ENCODE measurements at regions of chr6 and their contacts with region 1.

Region 1: GRCh38 chr6:160462551-160463109 is 114.5 kb downstream of the SLC22A3 start:
- DNase-seq: peak; percentile 67
- H3K4me3 Mint-ChIP-seq: peak overlapping the region; percentile 26
- H3K27ac Mint-ChIP-seq: peak overlapping the region; percentile 63
- H3K4me1 Mint-ChIP-seq: peaks cover 51% of the 10 kb centered on the region
- H3K27me3 Mint-ChIP-seq: peaks cover 15% of the 10 kb centered on the region

Region 2: DNA sequence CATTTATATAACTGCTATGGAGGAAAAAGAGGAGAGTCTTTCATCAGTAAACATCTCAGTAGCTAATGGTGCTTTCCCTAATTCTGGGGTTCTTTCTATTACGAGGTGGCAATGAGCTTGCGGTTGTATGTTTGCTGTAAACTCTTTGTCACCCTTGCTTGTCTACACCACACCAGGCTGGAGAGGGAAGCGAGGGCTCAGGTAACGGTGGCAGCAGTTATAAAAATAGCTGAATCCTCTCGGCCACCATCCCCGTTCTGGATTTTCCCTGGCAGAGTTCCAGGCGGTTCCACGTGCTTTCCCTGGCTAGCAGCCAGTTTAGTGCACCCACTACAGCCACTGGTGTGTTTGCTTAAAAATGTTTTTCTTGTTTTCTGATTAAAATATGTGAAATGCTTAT is 532.8 kb before region 1 on chr6:
- intact Hi-C with region 1: loop called (anchors 2 kb)
- DNase-seq: no peak
- H3K4me3 Mint-ChIP-seq: no peak overlapping the region
- H3K27ac Mint-ChIP-seq: peak overlapping the region; percentile 5
- H3K4me1 Mint-ChIP-seq: peaks cover 28% of the 10 kb centered on the region
- H3K27me3 Mint-ChIP-seq: peaks cover 9% of the 10 kb centered on the region

Region 3: DNA sequence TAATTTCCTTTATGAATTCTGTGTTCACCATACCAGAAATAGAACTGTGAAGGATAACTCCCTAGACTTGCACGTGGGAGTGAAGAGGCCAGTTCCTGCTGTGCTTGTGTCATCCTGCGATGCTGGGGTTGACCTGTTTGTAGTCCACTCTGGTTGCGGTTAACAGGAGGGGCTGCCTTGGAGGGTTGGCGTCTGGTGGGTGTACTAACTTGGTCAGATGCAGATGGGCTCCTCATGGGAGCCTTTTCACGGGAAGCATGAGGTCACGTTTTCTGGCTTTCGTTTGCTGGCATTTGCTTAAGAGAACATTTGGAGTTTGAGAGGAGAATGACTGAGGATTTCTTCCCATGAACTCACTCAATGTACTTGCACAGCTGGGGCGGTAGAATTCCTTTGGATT is 452.6 kb before region 1 on chr6:
- intact Hi-C with region 1: loop called (anchors 2 kb)
- DNase-seq: no peak
- H3K4me3 Mint-ChIP-seq: no peak overlapping the region
- H3K27ac Mint-ChIP-seq: no peak overlapping the region
- H3K4me1 Mint-ChIP-seq: peaks cover 34% of the 10 kb centered on the region
- H3K27me3 Mint-ChIP-seq: no peaks in the 10 kb centered on the region

Region 4: GRCh38 chr6:160221423-160221822 is 241.2 kb before region 1 on chr6:
- intact Hi-C with region 1: loop called (anchors 10 kb)
- DNase-seq: no peak
- H3K4me3 Mint-ChIP-seq: no peak overlapping the region
- H3K27ac Mint-ChIP-seq: no peak overlapping the region
- H3K4me1 Mint-ChIP-seq: peaks cover 5% of the 10 kb centered on the region
- H3K27me3 Mint-ChIP-seq: peaks cover 5% of the 10 kb centered on the region

Region 5: DNA sequence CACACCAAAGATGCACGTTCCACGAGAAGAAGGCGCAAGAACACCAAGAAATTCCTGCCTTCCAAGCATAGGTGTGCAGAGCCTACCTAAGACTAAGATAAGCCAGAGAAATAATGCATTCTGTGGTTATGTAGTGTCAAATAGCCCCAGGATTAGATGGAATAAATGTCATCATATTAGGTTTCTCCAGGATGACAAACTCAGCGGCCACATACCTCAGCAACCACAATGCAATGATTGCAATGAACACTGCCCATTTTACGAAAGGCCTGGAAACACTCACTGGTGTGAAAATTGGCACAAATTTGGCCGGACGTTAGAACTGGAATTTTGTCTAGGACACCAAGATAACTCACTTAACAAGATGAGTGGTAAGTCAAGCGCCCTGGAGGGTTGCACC is 15.3 kb after region 1 on chr6:
- intact Hi-C with region 1: no loop called
- DNase-seq: no peak
- H3K4me3 Mint-ChIP-seq: no peak overlapping the region
- H3K27ac Mint-ChIP-seq: no peak overlapping the region
- H3K4me1 Mint-ChIP-seq: peaks cover 5% of the 10 kb centered on the region
- H3K27me3 Mint-ChIP-seq: peaks cover 15% of the 10 kb centered on the region

Region 6: GRCh38 chr6:160520043-160520904 is 57.6 kb after region 1 on chr6:
- intact Hi-C with region 1: loop called (anchors 2 kb)
- DNase-seq: peak; percentile 64
- H3K4me3 Mint-ChIP-seq: peak overlapping the region; percentile 90
- H3K27ac Mint-ChIP-seq: peak overlapping the region; percentile 87
- H3K4me1 Mint-ChIP-seq: peaks cover 18% of the 10 kb centered on the region
- H3K27me3 Mint-ChIP-seq: peaks cover 48% of the 10 kb centered on the region